Right ventricle myocardium inferior (tissue), 1 donor: ENCODE measurements at regions of chr7 and their contacts with region 1.

Region 1: GRCh38 chr7:47327698-47328391 is 254.1 kb downstream of the TNS3 start:
- DNase-seq: peak; percentile 92
- ATAC-seq: peak; percentile 90

Region 2: DNA sequence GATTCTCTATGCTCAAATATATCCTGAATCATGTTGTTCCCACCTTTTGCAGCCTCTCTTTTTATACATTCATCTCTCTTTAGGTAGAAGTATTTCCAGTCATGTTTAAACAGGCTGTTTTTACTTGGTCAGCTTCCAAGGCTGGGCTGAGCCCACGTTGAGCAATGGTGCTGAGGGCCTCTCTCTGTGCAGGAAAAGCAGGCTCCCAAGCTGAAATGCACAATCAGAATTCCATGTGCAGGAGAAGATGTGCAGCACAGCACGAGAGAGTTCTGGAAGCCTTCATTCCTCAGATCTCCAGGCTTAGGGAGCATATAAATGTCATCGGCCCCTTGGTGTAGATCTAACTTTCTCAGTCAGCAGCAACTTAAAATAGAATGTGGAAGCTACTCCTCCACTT is 334.4 kb before region 1 on chr7:
- intact Hi-C with region 1: no loop called
- DNase-seq: no peak
- ATAC-seq: no peak

Region 3: GRCh38 chr7:47291461-47292081 is 36.3 kb before region 1 on chr7:
- intact Hi-C with region 1: loop called (anchors 5 kb)
- DNase-seq: no peak
- ATAC-seq: no peak